B cell (primary cell): ENCODE measurements at regions of chr17 and their contacts with region 1.

Region 1: DNA sequence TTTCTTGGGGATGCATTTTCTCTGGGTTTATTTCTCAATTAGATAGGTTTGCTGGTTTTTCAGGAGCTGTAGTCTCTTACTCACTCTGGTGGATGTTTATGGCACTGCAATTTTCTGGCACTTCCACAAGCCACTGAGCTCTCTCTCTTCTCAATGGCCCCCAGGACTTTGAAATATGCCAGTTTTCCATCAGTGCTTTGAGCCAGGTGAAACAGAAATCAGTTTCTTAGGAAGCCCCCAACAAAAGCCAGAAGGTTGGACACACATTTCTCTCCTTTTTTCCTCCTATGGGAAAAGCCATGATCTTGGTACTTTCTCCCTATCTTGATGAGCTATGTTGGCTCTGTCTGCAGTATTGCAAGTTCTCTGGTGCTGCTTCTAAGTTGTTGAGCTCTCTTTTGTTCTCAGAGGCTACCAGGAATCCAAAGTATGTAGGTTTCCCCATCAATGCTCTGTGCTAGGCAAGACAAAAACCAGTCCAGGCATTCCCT is 90.7 kb upstream of the SMIM36 start:
- DNase-seq: peak; percentile 56
- ATAC-seq: no peak
- H3K4me3 ChIP-seq: no peak overlapping the region
- H3K4me3 Mint-ChIP-seq: no peak overlapping the region
- H3K27ac ChIP-seq: no peak overlapping the region
- H3K27ac Mint-ChIP-seq: no peak overlapping the region
- H3K4me1 ChIP-seq: no peaks in the 10 kb centered on the region
- H3K4me1 Mint-ChIP-seq: no peaks in the 10 kb centered on the region
- H3K27me3 ChIP-seq: peaks cover 0 to 4% (median 0%) of the 10 kb centered on the region in 4 experiments
- H3K27me3 Mint-ChIP-seq: peaks cover 9% of the 10 kb centered on the region
- CTCF ChIP-seq: peak; percentile 69

Region 2: GRCh38 chr17:55533608-55534007 is 68.3 kb before region 1 on chr17:
- CTCF ChIA-PET with region 1: interaction called, 233 read pairs
- POLR2A ChIA-PET with region 1: no interaction called
- intact Hi-C with region 1: no loop called
- DNase-seq: no peak
- ATAC-seq: no peak
- H3K4me3 ChIP-seq: no peak overlapping the region
- H3K4me3 Mint-ChIP-seq: no peak overlapping the region
- H3K27ac ChIP-seq: no peak overlapping the region
- H3K27ac Mint-ChIP-seq: no peak overlapping the region
- H3K4me1 ChIP-seq: no peaks in the 10 kb centered on the region
- H3K4me1 Mint-ChIP-seq: no peaks in the 10 kb centered on the region
- H3K27me3 ChIP-seq: no peaks in the 10 kb centered on the region
- H3K27me3 Mint-ChIP-seq: peaks cover 1% of the 10 kb centered on the region
- CTCF ChIP-seq: no peak

Region 3: DNA sequence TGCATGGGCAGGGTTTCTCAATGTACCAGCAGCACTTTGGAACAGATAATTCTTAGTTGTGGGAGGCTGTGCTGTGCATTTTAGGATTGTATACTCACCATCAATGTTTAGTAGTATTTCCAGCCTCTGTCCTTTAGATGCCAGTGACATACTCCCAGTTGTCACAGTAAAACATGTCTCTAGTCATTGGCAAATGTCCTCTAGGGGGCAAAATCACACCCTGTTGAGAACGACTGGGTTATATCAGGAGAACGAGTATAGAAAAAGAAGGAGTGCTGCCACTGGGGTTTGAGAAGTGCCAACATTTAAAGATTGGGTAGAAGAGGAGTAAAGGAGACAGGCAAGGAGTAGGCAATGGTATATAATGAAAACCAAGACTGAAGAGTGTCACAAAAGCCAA is 52.8 kb before region 1 on chr17:
- CTCF ChIA-PET with region 1: interaction called, 14 read pairs
- POLR2A ChIA-PET with region 1: no interaction called
- intact Hi-C with region 1: loop called (anchors 1 kb)
- DNase-seq: peak; percentile 23
- ATAC-seq: no peak
- H3K4me3 ChIP-seq: no peak overlapping the region
- H3K4me3 Mint-ChIP-seq: no peak overlapping the region
- H3K27ac ChIP-seq: no peak overlapping the region
- H3K27ac Mint-ChIP-seq: no peak overlapping the region
- H3K4me1 ChIP-seq: no peaks in the 10 kb centered on the region
- H3K4me1 Mint-ChIP-seq: no peaks in the 10 kb centered on the region
- H3K27me3 ChIP-seq: no peaks in the 10 kb centered on the region
- H3K27me3 Mint-ChIP-seq: peaks cover 12% of the 10 kb centered on the region
- CTCF ChIP-seq: peak; percentile 21

Region 4: DNA sequence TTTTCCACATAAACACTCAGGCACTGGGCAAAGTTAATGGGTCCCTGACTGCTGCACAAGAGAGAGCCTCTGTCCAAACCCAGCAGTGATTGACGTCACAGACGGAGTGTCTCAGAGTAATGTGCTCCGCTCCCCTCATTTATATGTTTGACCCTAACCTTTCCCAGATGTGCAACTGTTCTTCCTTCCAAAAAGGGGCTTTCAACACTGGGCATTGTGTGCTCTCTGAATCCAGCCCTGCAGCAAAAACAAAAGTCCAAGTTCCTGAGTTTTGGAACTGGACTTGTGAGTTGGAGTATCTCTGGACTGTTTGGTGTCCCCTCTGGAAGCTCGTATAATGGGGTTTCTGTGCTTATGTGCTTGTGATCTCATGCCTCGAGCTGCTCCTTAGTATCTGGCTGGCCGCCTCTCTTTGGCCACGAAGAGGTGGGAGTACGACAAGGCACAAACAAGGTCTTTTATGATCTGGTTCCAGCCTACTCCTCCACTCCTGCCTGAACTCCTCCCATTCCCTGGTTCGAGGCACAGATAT is 14.2 kb before region 1 on chr17:
- CTCF ChIA-PET with region 1: interaction called, 13 read pairs
- POLR2A ChIA-PET with region 1: no interaction called
- intact Hi-C with region 1: no loop called
- DNase-seq: no peak
- ATAC-seq: no peak
- H3K4me3 ChIP-seq: no peak overlapping the region
- H3K4me3 Mint-ChIP-seq: no peak overlapping the region
- H3K27ac ChIP-seq: no peak overlapping the region
- H3K27ac Mint-ChIP-seq: no peak overlapping the region
- H3K4me1 ChIP-seq: no peaks in the 10 kb centered on the region
- H3K4me1 Mint-ChIP-seq: peaks cover 4% of the 10 kb centered on the region
- H3K27me3 ChIP-seq: no peaks in the 10 kb centered on the region
- H3K27me3 Mint-ChIP-seq: no peaks in the 10 kb centered on the region
- CTCF ChIP-seq: no peak

Region 5: GRCh38 chr17:55612691-55613141 is 10.8 kb after region 1 on chr17:
- CTCF ChIA-PET with region 1: interaction called, 18 read pairs
- POLR2A ChIA-PET with region 1: no interaction called
- intact Hi-C with region 1: no loop called
- DNase-seq: no peak
- ATAC-seq: no peak
- H3K4me3 ChIP-seq: no peak overlapping the region
- H3K4me3 Mint-ChIP-seq: no peak overlapping the region
- H3K27ac ChIP-seq: no peak overlapping the region
- H3K27ac Mint-ChIP-seq: no peak overlapping the region
- H3K4me1 ChIP-seq: no peaks in the 10 kb centered on the region
- H3K4me1 Mint-ChIP-seq: no peaks in the 10 kb centered on the region
- H3K27me3 ChIP-seq: no peaks in the 10 kb centered on the region
- H3K27me3 Mint-ChIP-seq: no peaks in the 10 kb centered on the region
- CTCF ChIP-seq: no peak

Region 6: DNA sequence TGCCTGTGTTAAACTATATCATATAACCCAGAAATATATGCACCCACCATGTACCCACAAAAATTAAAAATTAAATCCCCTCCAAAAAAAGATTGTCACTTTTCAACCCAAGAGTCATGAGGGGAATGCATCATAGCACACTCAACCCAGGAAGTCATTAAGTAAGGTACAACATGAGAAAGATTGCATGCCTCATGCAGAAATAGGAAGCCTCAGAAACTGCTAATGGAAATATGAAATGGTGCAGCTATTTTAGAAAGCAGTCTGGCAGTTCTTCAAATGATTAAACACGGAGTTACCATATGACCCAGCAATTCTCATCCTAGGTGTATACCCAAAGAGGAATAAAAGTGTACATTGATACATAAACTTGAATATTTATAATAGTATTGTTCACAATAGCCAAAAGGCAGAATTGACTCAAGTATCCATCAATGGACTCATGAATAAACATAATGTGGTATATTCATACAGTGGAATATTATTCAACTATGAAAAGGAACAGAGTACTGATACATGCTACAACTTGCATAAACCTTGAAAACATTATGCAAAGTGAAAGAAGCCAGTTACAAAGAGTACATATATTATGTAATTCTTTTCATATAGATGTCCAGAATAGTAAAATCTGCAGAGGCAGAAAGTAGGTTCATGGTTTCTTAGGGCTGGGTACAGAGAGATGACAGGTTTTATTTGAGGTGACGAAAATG is 50.4 kb after region 1 on chr17:
- CTCF ChIA-PET with region 1: no interaction called
- POLR2A ChIA-PET with region 1: no interaction called
- intact Hi-C with region 1: no loop called
- DNase-seq: no peak
- ATAC-seq: no peak
- H3K4me3 ChIP-seq: no peak overlapping the region
- H3K4me3 Mint-ChIP-seq: no peak overlapping the region
- H3K27ac ChIP-seq: no peak overlapping the region
- H3K27ac Mint-ChIP-seq: no peak overlapping the region
- H3K4me1 ChIP-seq: no peaks in the 10 kb centered on the region
- H3K4me1 Mint-ChIP-seq: no peaks in the 10 kb centered on the region
- H3K27me3 ChIP-seq: no peaks in the 10 kb centered on the region
- H3K27me3 Mint-ChIP-seq: peaks cover 14% of the 10 kb centered on the region
- CTCF ChIP-seq: no peak